ENCODE measurements at regions of chr17 and their contacts with region 1.

Region 1: DNA sequence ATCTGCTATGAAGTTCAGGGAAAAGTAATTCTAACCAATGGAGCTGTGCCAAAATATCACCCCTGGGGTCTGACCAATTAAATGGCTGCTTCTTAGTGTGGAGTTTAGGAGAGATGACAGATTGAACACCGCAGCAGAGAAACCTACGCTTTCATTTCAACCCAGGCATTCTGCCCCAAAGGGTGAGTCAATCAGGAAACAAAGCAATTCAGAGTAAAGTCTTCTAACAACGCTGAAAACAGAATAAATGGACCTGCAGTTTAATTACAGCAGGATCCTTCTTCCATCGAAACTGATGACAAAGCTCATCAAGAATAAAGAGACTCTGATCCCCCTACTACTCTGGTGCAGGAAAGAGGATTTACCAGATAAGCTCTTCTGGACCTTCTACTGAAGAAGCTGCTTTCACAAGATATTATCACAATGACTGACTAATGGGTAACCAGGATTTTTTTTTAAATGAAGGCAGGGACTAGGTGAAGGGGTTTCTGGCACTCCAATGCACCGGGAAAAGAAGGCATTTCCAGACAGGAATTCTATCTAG is 16.7 kb downstream of the RFFL start:
- DNase-seq: peak; percentile 44
- ATAC-seq: peak; percentile 44
- H3K4me3 ChIP-seq: peak overlapping the region in 2 of 5 experiments; percentile 0 to 1
- H3K4me3 Mint-ChIP-seq: peak overlapping the region; percentile 68
- H3K27ac ChIP-seq: peak overlapping the region in 1 of 2 donors; percentile 23
- H3K27ac Mint-ChIP-seq: peak overlapping the region; percentile 57
- H3K4me1 ChIP-seq: peaks cover 39 to 52% of the 10 kb centered on the region in 2 donors
- H3K4me1 Mint-ChIP-seq: peaks cover 48% of the 10 kb centered on the region
- H3K27me3 ChIP-seq: no peaks in the 10 kb centered on the region
- H3K27me3 Mint-ChIP-seq: no peaks in the 10 kb centered on the region
- CTCF ChIP-seq: no peak

Region 2: GRCh38 chr17:34990921-34991365 is 55.9 kb before region 1 on chr17:
- CTCF ChIA-PET with region 1: no interaction called
- POLR2A ChIA-PET with region 1: no interaction called
- intact Hi-C with region 1: no loop called
- DNase-seq: no peak
- ATAC-seq: no peak
- H3K4me3 ChIP-seq: no peak overlapping the region
- H3K4me3 Mint-ChIP-seq: no peak overlapping the region
- H3K27ac ChIP-seq: no peak overlapping the region
- H3K27ac Mint-ChIP-seq: no peak overlapping the region
- H3K4me1 ChIP-seq: no peaks in the 10 kb centered on the region
- H3K4me1 Mint-ChIP-seq: no peaks in the 10 kb centered on the region
- H3K27me3 ChIP-seq: no peaks in the 10 kb centered on the region
- H3K27me3 Mint-ChIP-seq: no peaks in the 10 kb centered on the region
- CTCF ChIP-seq: no peak

Region 3: DNA sequence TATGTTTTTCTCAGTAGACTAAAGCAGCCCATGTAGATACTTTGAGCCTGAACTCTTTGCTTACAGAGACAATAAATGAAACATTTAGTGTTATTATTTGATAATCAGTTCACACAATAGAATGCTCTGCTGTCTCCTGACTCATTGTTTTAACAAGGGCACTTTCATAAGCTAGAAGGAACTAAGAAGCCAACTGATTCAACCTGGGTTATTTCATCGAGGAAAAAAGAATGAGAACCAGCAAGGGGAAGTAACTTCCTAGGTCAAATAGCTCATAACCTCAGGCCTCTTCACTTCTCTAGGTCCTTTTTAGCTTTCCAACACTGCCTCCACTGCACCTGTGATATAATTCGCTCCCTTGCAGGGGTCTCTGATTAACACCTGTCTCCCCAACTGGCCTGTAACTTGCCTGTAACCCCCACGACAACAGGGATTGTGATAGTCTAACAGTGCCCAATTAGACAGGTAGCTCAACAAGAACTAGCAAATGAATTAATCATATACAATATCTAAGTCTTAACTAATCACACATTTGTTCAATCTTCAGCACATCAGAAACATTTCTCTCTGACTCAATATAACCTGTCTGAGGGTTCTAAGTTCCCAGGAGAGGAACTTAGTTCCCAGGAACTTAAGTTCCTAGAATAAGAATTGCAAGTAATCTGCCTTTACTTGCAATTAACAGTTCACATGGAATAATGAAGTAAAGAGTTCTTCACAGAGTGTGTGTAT is 18.1 kb before region 1 on chr17:
- CTCF ChIA-PET with region 1: no interaction called
- POLR2A ChIA-PET with region 1: interaction called, 4 read pairs
- intact Hi-C with region 1: loop called (anchors 2 kb)
- DNase-seq: no peak
- ATAC-seq: no peak
- H3K4me3 ChIP-seq: no peak overlapping the region
- H3K4me3 Mint-ChIP-seq: no peak overlapping the region
- H3K27ac ChIP-seq: peak overlapping the region in 1 of 2 donors; percentile 21
- H3K27ac Mint-ChIP-seq: no peak overlapping the region
- H3K4me1 ChIP-seq: peaks cover 11 to 13% of the 10 kb centered on the region in 2 donors
- H3K4me1 Mint-ChIP-seq: peaks cover 26% of the 10 kb centered on the region
- H3K27me3 ChIP-seq: no peaks in the 10 kb centered on the region
- H3K27me3 Mint-ChIP-seq: no peaks in the 10 kb centered on the region
- CTCF ChIP-seq: no peak

Region 4: DNA sequence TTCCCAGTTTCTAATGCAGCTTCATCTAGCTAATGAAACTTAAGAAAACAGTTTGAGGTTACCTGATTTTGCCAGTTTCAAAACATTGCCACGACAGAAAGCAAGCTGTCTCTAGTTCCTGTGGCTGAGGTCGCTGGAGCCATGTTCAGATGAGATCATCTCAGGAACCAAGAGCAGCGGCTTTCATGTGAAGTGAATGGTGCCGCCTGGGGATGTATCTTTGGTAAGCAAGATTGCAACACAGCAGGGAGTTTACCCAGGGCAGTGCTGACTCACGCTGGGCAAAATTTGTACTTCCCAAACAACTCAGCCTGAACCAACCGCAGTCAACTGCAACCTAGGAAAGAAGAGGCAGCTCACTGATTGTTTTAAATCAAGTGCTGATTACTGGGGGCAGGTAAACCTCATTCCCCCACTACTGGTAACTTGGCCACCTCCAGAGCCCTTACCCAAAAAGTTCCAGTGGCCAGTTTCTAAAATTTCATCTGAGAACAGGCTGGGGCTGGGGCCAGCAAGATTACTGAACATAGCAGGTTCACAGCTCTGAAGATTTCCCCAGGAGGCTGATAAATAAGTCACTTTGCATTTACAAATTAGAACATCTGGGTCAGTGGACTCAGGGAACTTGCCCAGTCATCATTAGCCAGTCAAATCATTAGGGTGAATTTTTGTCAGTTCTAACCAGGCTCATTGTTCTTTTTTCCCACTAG is 16.9 kb after region 1 on chr17 and contains the start of gene RFFL:
- CTCF ChIA-PET with region 1: interaction called, 6 read pairs
- POLR2A ChIA-PET with region 1: interaction called, 5 read pairs
- intact Hi-C with region 1: loop called (anchors 2 kb)
- DNase-seq: peak; percentile 82
- ATAC-seq: peak; percentile 97
- H3K4me3 ChIP-seq: peak within 1 kb of the TSS in 3 of 5 experiments; percentile 20 to 38 (median 30)
- H3K4me3 Mint-ChIP-seq: peak within 1 kb of the TSS; percentile 75
- H3K27ac ChIP-seq: peak within 1 kb of the TSS; percentile 42 to 63
- H3K27ac Mint-ChIP-seq: peak within 1 kb of the TSS; percentile 90
- H3K4me1 ChIP-seq: peaks cover 11 to 12% of the 10 kb centered on the region in 2 donors
- H3K4me1 Mint-ChIP-seq: peaks cover 28% of the 10 kb centered on the region
- H3K27me3 ChIP-seq: no peaks in the 10 kb centered on the region
- H3K27me3 Mint-ChIP-seq: no peaks in the 10 kb centered on the region
- CTCF ChIP-seq: no peak
- total RNA-seq, gene RFFL: 36.2 and 36.9 TPM in 2 replicates

Measured in B cell (primary cell).